Colonic mucosa (tissue), 4 donors: ENCODE measurements at regions of chr5 and their contacts with region 1.

Region 1: DNA sequence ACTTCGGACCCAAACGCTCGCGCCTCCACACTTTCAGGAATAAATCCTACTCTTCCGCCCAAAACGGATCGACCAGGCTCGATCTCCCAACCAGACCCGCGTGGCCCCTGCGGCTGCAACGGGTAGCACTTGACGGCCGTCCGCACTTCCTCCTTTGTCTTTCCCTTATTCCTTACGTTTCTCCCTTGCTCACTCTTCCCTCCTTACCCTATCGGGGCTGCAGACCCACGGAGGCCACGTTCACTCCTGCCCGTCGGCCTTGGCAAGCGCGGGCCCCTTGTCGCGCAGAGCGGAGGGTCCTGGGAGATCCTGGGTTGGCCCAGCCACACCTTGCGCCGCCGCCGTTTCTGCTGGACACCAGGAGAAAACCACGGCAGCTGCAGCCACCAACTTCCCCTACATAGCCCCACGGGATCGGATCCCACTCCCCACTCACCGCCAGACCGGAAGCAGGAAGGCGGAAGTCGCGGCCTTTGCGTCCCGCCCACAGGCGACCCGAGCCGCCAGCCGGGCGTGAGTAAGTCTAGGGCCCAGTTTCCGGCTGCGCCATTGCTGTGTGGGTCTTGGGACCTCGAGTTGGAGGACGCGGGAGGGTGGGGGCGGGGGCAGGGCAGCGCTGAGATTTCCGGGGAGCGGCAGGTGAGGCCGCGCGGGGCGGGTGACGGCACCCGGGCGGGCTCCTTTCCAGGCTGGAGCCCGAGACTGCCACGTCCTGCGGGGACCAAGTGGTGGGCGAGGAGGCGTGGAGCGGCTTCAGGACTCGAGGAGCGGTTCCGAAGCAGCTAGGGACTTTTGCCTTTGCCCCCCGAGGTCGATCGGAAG is at the start of gene SMIM15:
- DNase-seq: peak; percentile 93
- H3K4me3 ChIP-seq: peak within 1 kb of the TSS; percentile 56
- H3K27ac ChIP-seq: peak within 1 kb of the TSS; percentile 92
- H3K4me1 ChIP-seq: peaks cover 10% of the 10 kb centered on the region
- H3K27me3 ChIP-seq: no peaks in the 10 kb centered on the region
- CTCF ChIP-seq: no peak
- total RNA-seq, gene SMIM15: 99.6 to 123 TPM

Region 2: GRCh38 chr5:60993425-60993824 is 168.8 kb before region 1 on chr5:
- intact Hi-C with region 1: no loop called
- DNase-seq: no peak
- H3K4me3 ChIP-seq: no peak overlapping the region
- H3K27ac ChIP-seq: no peak overlapping the region
- H3K4me1 ChIP-seq: no peaks in the 10 kb centered on the region
- H3K27me3 ChIP-seq: no peaks in the 10 kb centered on the region
- CTCF ChIP-seq: no peak

Region 3: DNA sequence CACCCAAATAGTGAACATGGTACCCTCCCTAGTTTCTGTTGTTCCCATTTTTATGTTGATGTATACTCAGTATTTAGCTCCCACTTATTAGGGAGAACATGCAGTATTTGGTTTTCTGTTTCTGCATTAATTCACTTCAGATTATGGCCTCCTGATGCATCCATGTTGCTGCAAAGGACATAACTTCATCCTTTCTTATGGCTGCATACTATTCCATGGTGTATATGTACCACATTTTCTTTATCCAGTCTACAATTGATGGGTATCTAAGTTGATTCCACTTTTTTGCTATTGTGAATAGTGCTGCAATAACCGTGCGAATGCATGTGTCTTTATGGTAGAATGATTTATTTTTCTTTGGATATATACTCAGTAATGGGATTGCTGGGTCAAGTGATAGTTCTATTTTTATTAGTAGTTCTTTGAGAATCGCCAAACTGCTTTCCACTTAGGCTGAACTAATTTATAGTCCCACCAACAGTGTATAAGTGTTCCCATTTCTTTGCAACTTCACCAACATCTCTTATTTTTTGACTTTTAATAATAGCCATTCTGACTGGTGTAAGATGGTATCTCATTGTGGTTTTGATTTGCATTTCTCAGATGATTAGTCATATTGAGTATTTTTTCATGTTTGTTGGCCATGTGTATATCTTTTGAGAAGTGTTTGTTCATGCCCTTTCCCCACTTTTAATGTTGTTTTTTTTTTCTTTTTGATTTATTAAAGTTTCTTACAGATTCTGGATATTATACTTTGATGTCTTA is 79.5 kb before region 1 on chr5:
- intact Hi-C with region 1: no loop called
- DNase-seq: no peak
- H3K4me3 ChIP-seq: no peak overlapping the region
- H3K27ac ChIP-seq: no peak overlapping the region
- H3K4me1 ChIP-seq: no peaks in the 10 kb centered on the region
- H3K27me3 ChIP-seq: no peaks in the 10 kb centered on the region
- CTCF ChIP-seq: no peak

Region 4: GRCh38 chr5:61331407-61332357 is 169.5 kb after region 1 on chr5 and contains the start of gene ZSWIM6:
- intact Hi-C with region 1: loop called (anchors 5 kb)
- DNase-seq: peak; percentile 99
- H3K4me3 ChIP-seq: peak within 1 kb of the TSS; percentile 78
- H3K27ac ChIP-seq: peak within 1 kb of the TSS; percentile 97
- H3K4me1 ChIP-seq: no peaks in the 10 kb centered on the region
- H3K27me3 ChIP-seq: no peaks in the 10 kb centered on the region
- CTCF ChIP-seq: peak; percentile 1
- total RNA-seq, gene ZSWIM6: 16.4 to 24.5 TPM